Heart left ventricle (tissue), 16 donors: ENCODE measurements at regions of chr11 and their contacts with region 1.

Region 1: GRCh38 chr11:100863080-100863581 is 176.0 kb downstream of the ARHGAP42 start:
- DNase-seq: peak in 4 of 5 donors; percentile 47 to 59 (median 50)
- ATAC-seq: peak; percentile 75 to 97 (median 88)
- H3K4me3 ChIP-seq: no peak overlapping the region
- H3K27ac ChIP-seq: peak overlapping the region in 9 of 12 donors; percentile 7 to 56 (median 35)
- H3K4me1 ChIP-seq: peaks cover 0 to 14% (median 7%) of the 10 kb centered on the region in 12 donors
- H3K27me3 ChIP-seq: no peaks in the 10 kb centered on the region
- CTCF ChIP-seq: no peak
- POLR2A ChIP-seq: no peak

Region 2: DNA sequence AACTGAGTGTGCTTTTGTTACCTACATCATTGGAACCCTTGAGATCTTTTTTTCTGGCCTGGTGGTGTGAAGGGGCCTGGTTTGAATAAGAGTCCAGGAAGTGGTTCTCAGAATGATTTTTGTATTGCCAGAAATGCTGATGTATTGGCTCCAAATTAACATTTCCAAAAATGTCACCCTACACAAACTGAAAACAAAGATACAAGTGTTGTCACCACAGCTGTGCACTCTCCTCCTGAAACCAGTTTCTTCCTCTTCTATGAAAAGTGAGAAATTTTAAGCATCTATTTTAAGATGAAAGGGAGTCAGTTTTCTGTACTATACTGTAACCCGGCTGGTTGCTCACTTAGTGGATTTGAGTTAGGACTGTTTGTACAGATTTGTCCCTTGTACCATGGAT is 47.7 kb after region 1 on chr11:
- intact Hi-C with region 1: loop called in 1 of 10 experiments (anchors 5 kb)
- DNase-seq: no peak
- ATAC-seq: peak in 1 of 4 donors; percentile 48
- H3K4me3 ChIP-seq: no peak overlapping the region
- H3K27ac ChIP-seq: peak overlapping the region in 1 of 12 donors; percentile 3
- H3K4me1 ChIP-seq: no peaks in the 10 kb centered on the region
- H3K27me3 ChIP-seq: no peaks in the 10 kb centered on the region
- CTCF ChIP-seq: no peak
- POLR2A ChIP-seq: no peak